IMR-90 (cell line): ENCODE measurements at regions of chr3 and their contacts with region 1.

Region 1: DNA sequence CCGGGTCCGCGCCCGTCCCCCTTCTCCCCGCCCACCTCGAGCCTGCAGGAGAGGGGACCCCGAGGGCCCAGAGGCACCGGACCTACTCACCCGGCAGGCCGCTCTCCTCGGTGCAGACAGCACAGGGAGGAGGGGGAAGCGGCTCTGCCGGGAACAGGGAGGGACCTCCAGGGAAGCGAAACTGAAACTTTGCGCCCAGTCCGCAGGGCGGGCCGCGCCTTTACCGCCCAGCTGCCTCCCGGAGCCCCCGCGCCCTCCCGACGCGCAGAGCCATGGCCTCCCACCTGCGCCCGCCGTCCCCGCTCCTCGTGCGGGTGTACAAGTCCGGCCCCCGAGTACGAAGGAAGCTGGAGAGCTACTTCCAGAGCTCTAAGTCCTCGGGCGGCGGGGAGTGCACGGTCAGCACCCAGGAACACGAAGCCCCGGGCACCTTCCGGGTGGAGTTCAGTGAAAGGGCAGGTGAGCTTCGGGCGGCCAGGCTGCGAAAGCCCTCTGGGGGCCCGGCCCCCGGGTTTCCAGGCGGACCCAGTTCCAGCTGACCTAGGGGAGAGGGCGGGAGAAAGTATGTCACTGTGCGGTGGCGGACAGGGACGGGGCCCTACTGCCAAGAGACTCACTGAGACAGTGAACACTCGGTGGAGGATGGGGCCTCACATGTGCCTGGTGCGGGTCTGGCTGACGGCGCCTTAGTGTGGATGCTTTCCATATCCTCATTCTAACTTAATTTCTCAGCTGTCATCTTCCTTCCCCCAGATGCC is at the starts of genes DTX3L and PARP9:
- DNase-seq: peak; percentile 73
- ATAC-seq: peak; percentile 97
- H3K4me3 ChIP-seq: peak within 1 kb of the TSS; percentile 63
- H3K27ac ChIP-seq: peak within 1 kb of the TSS; percentile 88
- H3K4me1 ChIP-seq: peaks cover 3% of the 10 kb centered on the region; the same call in 1 of the 2 replicates
- H3K27me3 ChIP-seq: no peaks in the 10 kb centered on the region
- CTCF ChIP-seq: no peak
- POLR2A ChIP-seq: 0 out of 2 replicates have a peak, but pooled peaks have one; percentile 24
- RAD21 ChIP-seq: no peak
- total RNA-seq, gene DTX3L: 7.9 and 8.9 TPM in 2 replicates
- total RNA-seq, gene PARP9: 7.7 and 8.6 TPM in 2 replicates

Region 2: DNA sequence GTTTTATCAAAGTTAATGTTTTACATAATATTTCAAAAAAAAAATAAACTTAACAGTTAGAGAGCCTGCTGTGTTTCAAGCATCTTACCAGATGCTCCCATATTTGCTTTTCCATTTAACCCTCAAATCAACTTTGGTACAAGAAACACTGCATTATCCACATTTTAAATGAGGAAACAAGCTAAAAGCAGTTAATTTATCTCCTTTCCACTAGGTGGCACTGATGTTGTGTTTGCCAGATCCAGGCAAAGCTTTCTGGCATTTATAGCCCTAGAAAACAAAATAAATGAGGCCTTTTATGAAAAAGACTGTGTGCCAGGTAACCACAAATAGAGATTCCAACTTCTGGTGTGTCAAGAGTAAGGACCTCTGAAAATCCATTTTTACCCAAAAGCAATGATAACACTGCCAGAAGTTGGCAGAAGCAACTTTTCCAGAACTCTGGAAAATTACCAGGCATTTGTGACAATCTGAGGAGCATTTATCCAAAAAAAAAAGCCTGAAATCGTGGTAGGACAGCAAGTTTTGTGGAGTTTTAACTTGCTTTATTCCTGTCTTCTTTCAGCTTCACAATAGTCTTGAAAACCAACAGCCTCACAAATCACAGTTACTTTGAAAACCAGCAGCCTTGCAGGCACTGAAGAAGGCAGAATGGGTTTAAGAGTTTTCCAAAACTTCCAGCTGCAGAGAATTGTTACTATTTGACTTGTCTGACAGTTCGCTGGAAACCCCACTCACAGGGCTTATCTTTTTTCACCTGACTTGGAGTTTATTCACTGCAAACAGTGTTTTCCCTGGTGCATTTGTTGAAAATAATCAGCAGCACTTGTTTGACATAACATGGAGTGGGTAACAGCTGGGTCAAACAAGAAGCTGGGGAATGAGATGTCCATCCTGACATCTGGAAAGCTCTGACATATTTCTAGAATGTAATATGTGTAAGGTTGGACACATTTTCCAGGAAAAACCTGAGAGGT is 171.2 kb before region 1 on chr3:
- CTCF ChIA-PET with region 1: no interaction called
- POLR2A ChIA-PET with region 1: no interaction called
- dilution Hi-C with region 1: no loop called
- in situ Hi-C with region 1: no loop called
- intact Hi-C with region 1: loop called (anchors 5 kb)
- DNase-seq: peak; percentile 66
- ATAC-seq: peak; percentile 55; the same call in 1 of the 2 replicates
- H3K4me3 ChIP-seq: no peak overlapping the region
- H3K27ac ChIP-seq: no peak overlapping the region
- H3K4me1 ChIP-seq: peaks cover 5% of the 10 kb centered on the region
- H3K27me3 ChIP-seq: no peaks in the 10 kb centered on the region
- CTCF ChIP-seq: peak; percentile 74
- POLR2A ChIP-seq: no peak
- RAD21 ChIP-seq: peak; percentile 71

Region 3: DNA sequence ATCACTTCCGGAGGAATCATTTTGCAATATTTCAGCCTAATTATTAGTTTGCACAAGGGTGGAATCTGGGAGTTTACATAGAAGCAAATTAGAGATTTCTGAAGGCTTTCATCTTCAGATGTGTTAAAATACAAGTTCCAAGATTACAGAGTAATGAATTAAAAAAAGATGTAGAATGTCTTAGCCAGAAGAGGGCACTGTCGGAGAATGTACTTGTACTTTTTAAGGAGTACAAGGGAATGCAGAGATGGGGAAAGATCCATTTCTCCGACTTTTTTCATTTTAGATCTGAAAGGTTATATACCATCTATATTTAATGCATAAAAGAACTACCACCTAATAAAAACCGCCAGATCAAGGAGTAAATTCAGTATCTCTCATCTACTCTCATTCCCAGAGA is 105.3 kb before region 1 on chr3:
- CTCF ChIA-PET with region 1: interaction called, 3 read pairs
- POLR2A ChIA-PET with region 1: no interaction called
- dilution Hi-C with region 1: no loop called
- in situ Hi-C with region 1: no loop called
- intact Hi-C with region 1: loop called (anchors 2 kb)
- DNase-seq: peak; percentile 62
- ATAC-seq: peak; percentile 80
- H3K4me3 ChIP-seq: no peak overlapping the region
- H3K27ac ChIP-seq: no peak overlapping the region
- H3K4me1 ChIP-seq: no peaks in the 10 kb centered on the region
- H3K27me3 ChIP-seq: no peaks in the 10 kb centered on the region
- CTCF ChIP-seq: peak; percentile 55
- POLR2A ChIP-seq: no peak
- RAD21 ChIP-seq: peak; percentile 66

Region 4: GRCh38 chr3:122754929-122755328 is 190.6 kb after region 1 on chr3:
- CTCF ChIA-PET with region 1: no interaction called
- POLR2A ChIA-PET with region 1: no interaction called
- dilution Hi-C with region 1: no loop called
- in situ Hi-C with region 1: no loop called
- intact Hi-C with region 1: no loop called
- DNase-seq: peak; percentile 44
- ATAC-seq: peak; percentile 64
- H3K4me3 ChIP-seq: no peak overlapping the region
- H3K27ac ChIP-seq: no peak overlapping the region
- H3K4me1 ChIP-seq: no peaks in the 10 kb centered on the region; the same call in 1 of the 2 replicates
- H3K27me3 ChIP-seq: no peaks in the 10 kb centered on the region
- CTCF ChIP-seq: peak; percentile 69
- POLR2A ChIP-seq: no peak
- RAD21 ChIP-seq: peak; percentile 67

Region 5: GRCh38 chr3:122793568-122794416 is 229.5 kb after region 1 on chr3 and contains the start of gene HSPBAP1:
- CTCF ChIA-PET with region 1: no interaction called
- POLR2A ChIA-PET with region 1: no interaction called
- dilution Hi-C with region 1: no loop called
- in situ Hi-C with region 1: no loop called
- intact Hi-C with region 1: loop called (anchors 2 kb)
- DNase-seq: peak; percentile 91
- ATAC-seq: peak; percentile 60
- H3K4me3 ChIP-seq: peak within 1 kb of the TSS; percentile 90
- H3K27ac ChIP-seq: peak within 1 kb of the TSS; percentile 93
- H3K4me1 ChIP-seq: no peaks in the 10 kb centered on the region; the same call in 1 of the 2 replicates
- H3K27me3 ChIP-seq: no peaks in the 10 kb centered on the region
- CTCF ChIP-seq: no peak
- POLR2A ChIP-seq: peak; percentile 79; the same call in 1 of the 2 replicates
- RAD21 ChIP-seq: no peak
- total RNA-seq, gene HSPBAP1: 4.4 and 4.8 TPM in 2 replicates

Region 6: GRCh38 chr3:122942937-122943827 is 378.8 kb after region 1 on chr3:
- CTCF ChIA-PET with region 1: no interaction called
- POLR2A ChIA-PET with region 1: no interaction called
- dilution Hi-C with region 1: no loop called
- in situ Hi-C with region 1: no loop called
- intact Hi-C with region 1: loop called (anchors 10 kb)
- DNase-seq: peak; percentile 40
- ATAC-seq: peak; percentile 98
- H3K4me3 ChIP-seq: no peak overlapping the region
- H3K27ac ChIP-seq: no peak overlapping the region
- H3K4me1 ChIP-seq: peaks cover 1% of the 10 kb centered on the region; the same call in 1 of the 2 replicates
- H3K27me3 ChIP-seq: peaks cover 47% of the 10 kb centered on the region
- CTCF ChIP-seq: peak; percentile 90
- POLR2A ChIP-seq: no peak
- RAD21 ChIP-seq: peak; percentile 86

Region 7: GRCh38 chr3:123028233-123028828 is 464.0 kb after region 1 on chr3:
- CTCF ChIA-PET with region 1: no interaction called
- POLR2A ChIA-PET with region 1: no interaction called
- dilution Hi-C with region 1: no loop called
- in situ Hi-C with region 1: no loop called
- intact Hi-C with region 1: loop called (anchors 10 kb)
- DNase-seq: peak; percentile 72
- ATAC-seq: peak; percentile 79
- H3K4me3 ChIP-seq: peak overlapping the region; percentile 24
- H3K27ac ChIP-seq: no peak overlapping the region
- H3K4me1 ChIP-seq: peaks cover 5% of the 10 kb centered on the region; the same call in 1 of the 2 replicates
- H3K27me3 ChIP-seq: peaks cover 87% of the 10 kb centered on the region
- CTCF ChIP-seq: peak; percentile 65
- POLR2A ChIP-seq: no peak
- RAD21 ChIP-seq: peak; percentile 73